ENCODE measurements at regions of chr16 and their contacts with region 1.

Region 1: DNA sequence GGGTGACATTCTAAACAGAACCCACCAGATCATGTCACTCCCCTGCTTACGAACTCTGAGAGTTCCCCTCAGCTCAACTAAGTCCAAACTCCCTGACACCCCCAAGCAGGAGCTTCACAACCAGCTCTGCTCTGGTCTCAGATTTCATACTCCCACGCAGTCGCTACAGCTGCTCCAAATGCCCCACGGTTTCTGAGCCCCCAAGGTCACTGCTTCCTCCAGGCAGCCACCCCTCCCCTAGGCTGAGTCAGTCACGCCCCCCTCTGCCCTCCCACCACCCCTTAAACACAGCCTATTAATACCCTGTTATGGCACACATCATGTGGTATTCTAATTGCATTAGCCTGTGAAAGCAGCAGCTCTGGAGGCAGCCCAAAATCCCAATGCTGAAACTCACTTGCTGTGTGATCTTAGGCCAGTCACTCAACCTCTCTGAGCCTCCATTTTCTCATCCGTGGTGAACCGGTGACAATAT is 51.5 kb downstream of the GSG1L start:
- DNase-seq: peak in 1 of 5 donors; percentile 24
- H3K4me3 ChIP-seq: no peak overlapping the region
- H3K27ac ChIP-seq: no peak overlapping the region
- H3K4me1 ChIP-seq: peaks cover 2% of the 10 kb centered on the region
- H3K27me3 ChIP-seq: no peaks in the 10 kb centered on the region
- CTCF ChIP-seq: no peak
- EP300 ChIP-seq: no peak
- POLR2A ChIP-seq: no peak

Region 2: DNA sequence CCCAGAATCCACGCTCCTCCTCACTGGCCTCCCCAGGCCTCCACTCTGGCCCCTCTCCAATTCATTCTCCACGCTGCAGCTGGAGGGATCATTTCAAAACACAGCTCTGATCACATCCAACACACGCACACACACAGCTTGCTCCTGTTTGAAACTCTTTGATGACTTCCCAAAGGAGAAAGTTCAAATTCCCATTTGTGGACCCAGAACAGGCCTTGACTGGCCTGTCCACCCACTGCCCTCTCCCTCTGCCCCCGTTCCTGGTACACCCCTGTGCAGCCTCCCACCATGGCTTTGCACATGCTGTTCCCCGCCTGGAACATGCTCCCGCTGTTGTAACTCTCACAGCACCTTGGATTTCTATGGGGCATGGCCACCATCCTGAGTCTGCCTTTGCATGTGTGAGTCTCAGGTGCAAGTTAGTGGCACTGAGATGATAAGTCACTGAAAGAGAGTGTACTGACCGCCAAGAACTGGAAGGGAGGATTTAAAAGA is 48.5 kb before region 1 on chr16:
- intact Hi-C with region 1: loop called in 1 of 4 experiments (anchors 2 kb)
- DNase-seq: no peak
- H3K4me3 ChIP-seq: no peak overlapping the region
- H3K27ac ChIP-seq: no peak overlapping the region
- H3K4me1 ChIP-seq: no peaks in the 10 kb centered on the region
- H3K27me3 ChIP-seq: no peaks in the 10 kb centered on the region
- CTCF ChIP-seq: no peak
- EP300 ChIP-seq: no peak
- POLR2A ChIP-seq: no peak